ENCODE measurements at regions of chr19 and their contacts with region 1.

Region 1: GRCh38 chr19:12965017-12965811 is 4.2 kb upstream of the DAND5 start:
- DNase-seq: peak; percentile 59 to 97
- H3K4me3 ChIP-seq: peak overlapping the region in 3 of 4 experiments; percentile 27 to 54 (median 46); a peak in 5 of 8 replicates
- H3K27ac ChIP-seq: peak overlapping the region; percentile 34; the same call in 1 of the 2 replicates
- H3K4me1 ChIP-seq: peaks cover 0 to 6% (median 2%) of the 10 kb centered on the region in 4 experiments; a peak in 2 of 7 replicates
- H3K27me3 ChIP-seq: no peaks in the 10 kb centered on the region
- CTCF ChIP-seq: peak; percentile 92 to 99 (median 99)
- EP300 ChIP-seq: no peak
- POLR2A ChIP-seq: no peak; a peak in 1 of 3 replicates
- RAD21 ChIP-seq: peak; percentile 54 to 65

Region 2: DNA sequence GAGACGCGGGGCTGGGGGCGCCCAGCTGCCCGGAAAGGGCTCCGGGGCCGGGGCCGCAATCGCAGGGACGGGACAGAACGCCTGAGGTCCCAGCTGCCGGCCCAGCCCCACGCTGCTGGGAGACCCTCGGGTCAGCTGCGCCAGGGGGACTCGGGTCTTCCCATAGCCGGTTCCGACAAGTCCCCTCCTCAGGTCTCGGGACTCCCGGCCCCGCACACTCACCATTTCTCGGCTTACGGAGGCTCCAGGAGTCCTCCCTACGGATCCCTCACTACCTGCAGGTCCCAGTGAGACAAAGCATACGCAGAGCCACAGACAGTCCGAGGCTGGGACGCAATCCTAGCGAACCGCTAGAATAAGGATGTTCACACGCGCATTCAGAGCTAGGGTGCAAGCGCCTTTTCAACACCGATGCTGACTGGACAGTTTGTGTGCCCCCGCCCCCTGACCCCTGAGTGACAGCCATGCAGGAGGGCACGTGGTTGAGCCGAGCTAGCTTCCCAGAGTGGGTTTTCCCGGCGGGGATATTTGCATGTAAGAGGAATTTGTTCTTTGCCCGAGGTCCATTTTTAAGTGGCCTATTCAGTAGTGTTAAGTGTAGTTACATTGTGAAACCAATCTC is 368.2 kb before region 1 on chr19:
- CTCF ChIA-PET with region 1: no interaction called
- POLR2A ChIA-PET with region 1: no interaction called
- DNase-seq: no peak
- H3K4me3 ChIP-seq: no peak overlapping the region
- H3K27ac ChIP-seq: no peak overlapping the region
- H3K4me1 ChIP-seq: no peaks in the 10 kb centered on the region
- H3K27me3 ChIP-seq: no peaks in the 10 kb centered on the region
- CTCF ChIP-seq: no peak
- EP300 ChIP-seq: no peak
- POLR2A ChIP-seq: no peak
- RAD21 ChIP-seq: no peak

Region 3: GRCh38 chr19:12881172-12881808 is 83.9 kb before region 1 on chr19 and contains the start of gene DNASE2:
- CTCF ChIA-PET with region 1: interaction called, 10 read pairs
- POLR2A ChIA-PET with region 1: interaction called, 5 read pairs
- DNase-seq: peak; percentile 85 to 95
- H3K4me3 ChIP-seq: peak within 1 kb of the TSS; percentile 85 to 92 (median 88)
- H3K27ac ChIP-seq: peak within 1 kb of the TSS; percentile 20; the same call in 1 of the 2 replicates
- H3K4me1 ChIP-seq: peaks cover 0 to 7% (median 6%) of the 10 kb centered on the region in 4 experiments; a peak in 5 of 7 replicates
- H3K27me3 ChIP-seq: peaks cover 0 to under 1% (median under 1%) of the 10 kb centered on the region in 4 experiments; a peak in 1 of 7 replicates
- CTCF ChIP-seq: no peak
- EP300 ChIP-seq: peak in 1 of 2 experiments; percentile 15; a peak in 1 of 3 replicates
- POLR2A ChIP-seq: peak in 1 of 2 experiments; percentile 78; a peak in 2 of 3 replicates
- RAD21 ChIP-seq: no peak
- total RNA-seq, gene DNASE2: 32.9 and 33.2 TPM in 2 replicates

Region 4: DNA sequence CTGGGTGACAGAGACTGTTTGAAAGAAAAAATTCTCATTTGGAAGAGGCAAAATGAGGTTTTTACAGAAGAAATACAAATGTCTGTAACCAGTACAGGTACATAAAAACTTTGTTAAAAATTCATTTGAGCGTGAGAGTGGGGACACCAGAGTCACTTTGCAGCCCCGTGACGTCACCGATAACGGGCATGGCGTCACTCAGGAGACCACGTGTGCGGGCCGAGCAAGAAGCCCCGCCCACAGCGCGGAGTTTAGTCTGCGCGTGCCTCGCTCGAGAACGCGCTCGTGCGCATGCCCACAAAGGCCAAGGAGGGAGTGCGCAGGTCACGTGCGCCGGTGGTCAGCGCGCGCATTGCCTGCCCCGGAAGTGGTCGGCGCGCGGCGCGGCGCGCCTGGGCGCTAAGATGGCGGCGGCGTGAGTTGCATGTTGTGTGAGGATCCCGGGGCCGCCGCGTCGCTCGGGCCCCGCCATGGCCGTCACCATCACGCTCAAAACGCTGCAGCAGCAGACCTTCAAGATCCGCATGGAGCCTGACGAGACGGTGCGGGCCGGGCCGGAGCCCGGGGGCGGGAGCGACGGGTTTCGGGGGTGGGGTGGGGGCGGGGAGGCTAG is 19.6 kb before region 1 on chr19 and contains the start of gene RAD23A:
- CTCF ChIA-PET with region 1: interaction called, 62 read pairs
- POLR2A ChIA-PET with region 1: interaction called, 67 read pairs
- DNase-seq: peak; percentile 96 to 99
- H3K4me3 ChIP-seq: peak within 1 kb of the TSS; percentile 77 to 93 (median 90)
- H3K27ac ChIP-seq: peak within 1 kb of the TSS; percentile 96
- H3K4me1 ChIP-seq: peaks cover 0 to 3% (median under 1%) of the 10 kb centered on the region in 4 experiments; a peak in 1 of 7 replicates
- H3K27me3 ChIP-seq: no peaks in the 10 kb centered on the region
- CTCF ChIP-seq: peak in 1 of 3 experiments; percentile 2; a peak in 1 of 4 replicates
- EP300 ChIP-seq: no peak
- POLR2A ChIP-seq: peak; percentile 98
- RAD21 ChIP-seq: no peak
- total RNA-seq, gene RAD23A: 73.3 and 76.1 TPM in 2 replicates

Region 5: DNA sequence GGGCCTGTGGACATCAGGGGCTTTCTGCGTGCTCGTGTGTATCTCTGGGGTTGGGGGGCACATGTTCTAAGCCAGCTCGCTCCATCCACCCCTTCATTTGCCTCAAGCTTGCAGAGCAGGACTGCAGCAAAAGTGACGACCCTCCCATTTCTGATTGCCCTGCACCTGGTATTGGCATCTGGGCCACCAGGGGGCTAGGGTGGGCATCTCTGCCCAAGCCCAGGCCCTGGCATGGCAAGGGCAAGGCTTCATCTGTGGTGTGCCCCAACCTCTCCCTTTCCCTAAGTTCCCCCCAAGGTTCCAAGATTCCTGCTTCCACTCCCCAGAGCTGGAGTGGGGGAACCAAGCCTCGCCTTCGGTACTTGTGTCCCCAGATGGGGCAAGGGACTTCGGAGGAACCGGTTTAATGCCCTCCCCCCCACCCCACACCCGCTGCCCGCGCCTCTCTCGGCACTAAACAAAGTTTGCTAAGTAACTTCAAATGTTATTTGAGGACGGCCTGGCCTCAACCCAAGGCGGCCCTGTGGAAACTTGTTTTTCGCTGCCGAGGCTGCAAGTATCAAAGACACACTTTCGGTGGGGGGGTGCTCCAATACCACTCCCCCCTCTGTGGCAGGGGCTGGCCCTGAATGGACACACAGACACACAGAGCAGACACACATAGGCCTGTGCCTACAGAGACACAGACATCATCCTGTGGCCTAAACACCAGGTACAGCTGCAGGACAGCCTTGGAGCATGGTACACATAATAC is 42.3 kb after region 1 on chr19:
- CTCF ChIA-PET with region 1: interaction called, 11 read pairs
- POLR2A ChIA-PET with region 1: no interaction called
- DNase-seq: no peak
- H3K4me3 ChIP-seq: no peak overlapping the region
- H3K27ac ChIP-seq: no peak overlapping the region
- H3K4me1 ChIP-seq: peaks cover 4 to 28% (median 16%) of the 10 kb centered on the region in 4 experiments
- H3K27me3 ChIP-seq: peaks cover 52 to 96% (median 87%) of the 10 kb centered on the region in 4 experiments
- CTCF ChIP-seq: peak in 1 of 3 experiments; percentile 10; a peak in 1 of 4 replicates
- EP300 ChIP-seq: no peak
- POLR2A ChIP-seq: no peak
- RAD21 ChIP-seq: no peak

Region 6: DNA sequence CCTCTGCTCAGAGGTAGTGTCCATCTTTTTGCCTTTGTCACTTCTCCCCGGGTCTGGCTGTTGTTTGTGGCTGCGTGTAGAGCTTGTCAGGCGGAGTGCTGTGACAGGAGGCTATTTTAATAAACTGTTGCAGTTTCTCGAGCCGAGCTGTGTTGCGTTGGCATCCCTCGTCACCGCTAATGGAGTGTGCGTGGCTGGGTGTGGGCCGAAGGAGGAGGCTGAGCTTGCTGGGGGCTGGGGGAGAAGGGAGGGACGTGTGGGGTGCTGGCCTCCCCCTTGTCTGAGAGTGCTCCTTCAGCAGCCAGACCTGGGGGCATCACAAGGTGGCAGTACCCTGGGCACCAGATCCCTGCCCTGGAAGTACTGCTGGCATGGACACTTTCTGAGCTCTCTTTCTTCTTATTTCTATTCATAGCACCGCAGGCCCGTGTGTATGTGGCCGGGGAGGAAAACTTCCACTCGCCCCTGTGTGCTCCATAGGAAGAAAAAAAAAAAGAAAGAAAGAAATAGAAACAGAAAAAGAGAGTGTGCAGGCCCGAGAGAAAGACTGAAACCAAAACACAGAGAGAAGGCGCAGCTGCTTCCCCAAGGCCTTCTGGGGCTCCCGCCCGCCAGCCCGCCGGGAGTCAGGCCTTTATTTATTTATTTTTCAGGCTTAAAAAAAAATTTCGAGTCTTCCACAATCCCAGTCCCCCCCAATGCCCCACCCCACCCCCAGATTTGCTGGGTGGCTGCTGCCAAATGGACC is 57.1 kb after region 1 on chr19:
- CTCF ChIA-PET with region 1: no interaction called
- POLR2A ChIA-PET with region 1: no interaction called
- DNase-seq: no peak
- H3K4me3 ChIP-seq: peak overlapping the region in 1 of 4 experiments; percentile 46; a peak in 2 of 8 replicates
- H3K27ac ChIP-seq: no peak overlapping the region
- H3K4me1 ChIP-seq: peaks cover 11 to 40% (median 31%) of the 10 kb centered on the region in 4 experiments
- H3K27me3 ChIP-seq: peaks cover 79 to 98% (median 96%) of the 10 kb centered on the region in 4 experiments
- CTCF ChIP-seq: no peak
- EP300 ChIP-seq: no peak
- POLR2A ChIP-seq: no peak
- RAD21 ChIP-seq: no peak

Region 7: DNA sequence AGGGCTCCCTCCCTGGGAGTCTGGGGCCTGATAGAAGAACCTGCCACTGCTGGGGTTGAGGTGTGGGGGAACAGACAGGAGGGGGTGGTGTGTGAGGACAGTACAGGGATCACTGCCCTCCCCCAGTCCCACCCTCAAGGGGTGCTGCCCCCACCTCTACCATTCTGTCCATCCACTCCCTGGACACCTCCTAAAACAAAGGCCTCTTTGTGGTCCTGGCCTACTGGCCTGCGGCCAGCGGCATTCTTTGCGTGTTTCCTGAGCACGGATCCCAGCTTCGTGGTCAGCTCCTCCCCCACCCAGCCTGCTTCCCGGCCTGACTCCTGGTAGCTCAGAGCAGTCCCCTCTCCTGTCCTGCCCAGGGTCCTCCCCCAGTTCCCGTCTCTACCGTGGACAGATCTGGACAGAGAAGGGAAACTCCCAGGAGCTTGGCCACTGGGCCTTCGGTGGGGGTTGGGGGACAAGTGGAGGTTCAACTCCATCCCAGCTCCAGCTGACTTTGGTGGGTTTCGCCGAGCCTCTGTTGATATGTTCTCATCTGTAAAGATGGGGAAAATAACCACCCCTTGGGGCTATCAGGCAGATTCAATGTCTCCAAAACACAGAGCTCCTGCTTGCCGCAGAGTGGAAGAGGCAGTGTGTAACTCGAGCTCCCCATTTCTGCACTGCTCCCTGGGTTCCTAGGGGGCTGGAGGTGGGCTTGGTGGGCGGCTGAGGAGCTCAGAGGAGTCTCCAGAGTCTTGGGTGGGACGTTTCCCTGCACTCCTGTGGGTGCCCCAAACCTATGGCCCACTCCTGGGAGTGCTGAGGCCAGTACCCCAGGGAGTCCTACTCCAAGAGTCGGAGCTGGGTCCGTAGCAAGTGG is 88.8 kb after region 1 on chr19:
- CTCF ChIA-PET with region 1: interaction called, 41 read pairs
- POLR2A ChIA-PET with region 1: interaction called, 4 read pairs
- DNase-seq: no peak
- H3K4me3 ChIP-seq: no peak overlapping the region
- H3K27ac ChIP-seq: no peak overlapping the region
- H3K4me1 ChIP-seq: peaks cover 7 to 42% (median 39%) of the 10 kb centered on the region in 4 experiments
- H3K27me3 ChIP-seq: peaks cover 87 to 100% (median 98%) of the 10 kb centered on the region in 4 experiments
- CTCF ChIP-seq: no peak
- EP300 ChIP-seq: no peak
- POLR2A ChIP-seq: no peak
- RAD21 ChIP-seq: no peak

Region 8: DNA sequence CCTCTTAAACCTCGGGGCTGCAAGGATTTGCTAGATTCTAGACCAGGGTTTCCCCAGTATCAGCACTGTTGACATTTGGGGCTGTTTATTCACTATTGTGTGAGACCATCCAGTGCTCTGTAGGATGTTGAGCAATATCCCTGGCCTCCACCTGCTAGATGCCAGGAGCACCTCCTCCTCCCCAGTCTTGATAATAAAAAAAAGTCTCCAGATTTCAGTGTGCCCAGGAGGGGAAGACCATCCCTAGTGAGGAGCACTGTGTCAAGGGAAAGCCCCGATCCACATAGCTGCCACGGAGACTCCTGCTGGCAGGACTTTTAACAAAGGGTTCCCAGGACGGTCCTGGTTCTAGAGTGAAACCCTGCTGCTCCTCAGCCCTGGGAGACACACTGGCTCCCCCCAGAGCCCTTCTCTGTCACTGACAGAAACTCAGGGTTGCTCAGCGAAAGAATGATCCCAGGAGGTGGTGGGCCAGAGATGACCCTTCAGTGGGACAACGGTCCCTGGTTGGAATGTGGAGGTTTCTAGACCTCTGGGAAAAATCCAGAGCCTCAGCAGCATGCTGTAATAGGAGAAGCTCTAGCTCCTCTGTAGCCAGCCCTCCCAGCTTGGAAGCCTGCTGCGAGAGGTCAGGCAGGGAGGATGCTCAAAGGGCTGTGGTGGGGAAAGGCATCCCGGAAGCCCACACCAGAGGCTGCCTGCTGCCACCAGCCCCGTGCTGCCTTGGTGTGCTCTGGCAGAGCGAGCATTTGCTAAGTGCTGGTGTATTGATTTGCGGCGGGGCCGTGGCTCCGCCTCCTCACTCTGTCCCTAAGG is 117.2 kb after region 1 on chr19:
- CTCF ChIA-PET with region 1: interaction called, 10 read pairs
- POLR2A ChIA-PET with region 1: no interaction called
- DNase-seq: no peak
- H3K4me3 ChIP-seq: no peak overlapping the region
- H3K27ac ChIP-seq: no peak overlapping the region
- H3K4me1 ChIP-seq: peaks cover 11 to 29% (median 19%) of the 10 kb centered on the region in 4 experiments
- H3K27me3 ChIP-seq: peaks cover 0 to 16% (median 8%) of the 10 kb centered on the region in 4 experiments; a peak in 3 of 7 replicates
- CTCF ChIP-seq: peak; percentile 22 to 42 (median 36); a peak in 3 of 4 replicates
- EP300 ChIP-seq: no peak
- POLR2A ChIP-seq: no peak
- RAD21 ChIP-seq: peak; percentile 48 to 54